AG04449 (cell line): ENCODE measurements at regions of chr17 and their contacts with region 1.

Region 1: GRCh38 chr17:1882836-1883235 is 53.0 kb downstream of the RPA1 start:
- DNase-seq: no peak
- H3K4me3 ChIP-seq: no peak overlapping the region
- CTCF ChIP-seq: peak; percentile 47

Region 2: GRCh38 chr17:1793447-1793806 is 89.4 kb before region 1 on chr17:
- CTCF ChIA-PET with region 1: no interaction called
- POLR2A ChIA-PET with region 1: no interaction called
- DNase-seq: no peak
- H3K4me3 ChIP-seq: no peak overlapping the region
- CTCF ChIP-seq: no peak

Region 3: DNA sequence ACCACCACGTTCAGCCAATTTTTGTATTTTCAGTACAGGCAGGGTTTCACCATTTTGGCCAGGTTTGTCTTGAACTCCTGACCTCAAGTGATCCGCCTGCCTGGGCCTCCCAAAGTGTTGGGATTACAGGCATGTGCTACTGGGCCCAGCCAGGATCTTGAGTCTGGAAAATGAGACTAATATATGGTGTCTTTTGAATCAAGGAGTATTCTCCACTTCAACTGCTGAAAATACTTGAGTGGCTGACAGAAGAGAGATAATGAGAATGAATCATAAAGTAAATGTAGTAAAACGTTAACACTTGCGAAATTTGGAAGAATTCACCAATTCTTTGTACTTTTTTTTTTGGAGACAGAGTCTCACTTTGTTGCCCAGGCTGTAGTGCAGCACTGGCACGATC is 69.7 kb before region 1 on chr17:
- CTCF ChIA-PET with region 1: no interaction called
- POLR2A ChIA-PET with region 1: no interaction called
- DNase-seq: no peak
- H3K4me3 ChIP-seq: no peak overlapping the region
- CTCF ChIP-seq: no peak

Region 4: DNA sequence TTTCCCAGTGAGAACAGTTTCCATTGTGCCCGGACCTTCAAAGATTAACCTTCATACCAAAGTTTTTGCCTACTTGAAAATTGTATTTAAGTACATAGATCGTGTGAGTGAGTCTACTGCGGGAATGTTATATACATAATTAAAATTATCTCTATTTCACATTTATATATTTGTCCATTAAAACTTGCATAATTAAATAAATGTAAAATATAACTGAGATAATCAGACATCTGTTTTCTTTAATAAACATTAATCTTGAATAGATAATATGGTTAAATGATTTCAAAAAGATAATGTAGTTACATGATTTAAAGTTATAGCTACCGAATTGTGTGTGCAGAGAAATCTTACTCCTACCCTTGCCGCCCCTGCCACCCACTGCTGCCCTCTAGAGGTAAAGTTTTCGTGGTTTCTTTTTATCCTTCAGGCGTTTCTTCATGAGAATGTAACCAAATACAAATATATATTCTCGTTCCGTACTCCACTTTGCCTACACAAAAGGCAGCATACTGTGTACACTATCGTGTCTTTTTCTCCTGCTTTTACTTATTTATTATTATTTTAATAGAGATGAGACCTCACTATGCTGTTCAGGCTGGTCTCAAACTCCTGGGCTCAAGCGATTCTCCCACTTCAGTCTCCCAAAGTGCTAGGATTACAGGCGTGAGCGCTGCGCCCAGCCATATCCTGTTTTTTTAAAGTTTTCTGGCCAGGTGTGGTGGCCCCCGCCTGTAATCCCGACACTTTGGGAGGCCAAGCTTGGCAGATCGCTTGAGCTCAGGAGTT is 17.4 kb before region 1 on chr17:
- CTCF ChIA-PET with region 1: interaction called, 18 read pairs
- POLR2A ChIA-PET with region 1: interaction called, 3 read pairs
- DNase-seq: no peak
- H3K4me3 ChIP-seq: no peak overlapping the region
- CTCF ChIP-seq: peak; percentile 34

Region 5: DNA sequence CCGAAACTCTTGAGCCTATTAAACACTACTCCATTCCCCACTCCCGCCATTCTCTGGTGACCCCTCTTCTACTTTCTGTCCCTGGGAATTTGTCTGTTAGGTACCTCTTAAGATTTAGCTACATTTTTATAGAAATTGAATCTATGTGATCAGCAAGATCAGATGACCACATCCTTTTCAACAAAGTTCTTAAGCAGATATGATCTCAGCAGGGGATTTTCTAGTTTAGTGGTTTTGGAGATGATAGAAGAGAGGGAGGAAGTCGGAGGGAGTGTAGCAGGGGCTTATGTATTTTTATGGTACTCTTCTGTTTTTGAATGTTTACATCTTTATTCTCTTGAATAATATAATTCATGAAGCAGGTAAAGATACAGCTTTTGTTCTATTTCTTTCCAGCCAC is 12.2 kb before region 1 on chr17:
- CTCF ChIA-PET with region 1: interaction called, 18 read pairs
- POLR2A ChIA-PET with region 1: interaction called, 3 read pairs
- DNase-seq: no peak
- H3K4me3 ChIP-seq: no peak overlapping the region
- CTCF ChIP-seq: no peak

Region 6: GRCh38 chr17:1896243-1897104 is 13.6 kb after region 1 on chr17:
- CTCF ChIA-PET with region 1: interaction called, 57 read pairs
- POLR2A ChIA-PET with region 1: no interaction called
- DNase-seq: no peak
- H3K4me3 ChIP-seq: no peak overlapping the region
- CTCF ChIP-seq: no peak

Region 7: DNA sequence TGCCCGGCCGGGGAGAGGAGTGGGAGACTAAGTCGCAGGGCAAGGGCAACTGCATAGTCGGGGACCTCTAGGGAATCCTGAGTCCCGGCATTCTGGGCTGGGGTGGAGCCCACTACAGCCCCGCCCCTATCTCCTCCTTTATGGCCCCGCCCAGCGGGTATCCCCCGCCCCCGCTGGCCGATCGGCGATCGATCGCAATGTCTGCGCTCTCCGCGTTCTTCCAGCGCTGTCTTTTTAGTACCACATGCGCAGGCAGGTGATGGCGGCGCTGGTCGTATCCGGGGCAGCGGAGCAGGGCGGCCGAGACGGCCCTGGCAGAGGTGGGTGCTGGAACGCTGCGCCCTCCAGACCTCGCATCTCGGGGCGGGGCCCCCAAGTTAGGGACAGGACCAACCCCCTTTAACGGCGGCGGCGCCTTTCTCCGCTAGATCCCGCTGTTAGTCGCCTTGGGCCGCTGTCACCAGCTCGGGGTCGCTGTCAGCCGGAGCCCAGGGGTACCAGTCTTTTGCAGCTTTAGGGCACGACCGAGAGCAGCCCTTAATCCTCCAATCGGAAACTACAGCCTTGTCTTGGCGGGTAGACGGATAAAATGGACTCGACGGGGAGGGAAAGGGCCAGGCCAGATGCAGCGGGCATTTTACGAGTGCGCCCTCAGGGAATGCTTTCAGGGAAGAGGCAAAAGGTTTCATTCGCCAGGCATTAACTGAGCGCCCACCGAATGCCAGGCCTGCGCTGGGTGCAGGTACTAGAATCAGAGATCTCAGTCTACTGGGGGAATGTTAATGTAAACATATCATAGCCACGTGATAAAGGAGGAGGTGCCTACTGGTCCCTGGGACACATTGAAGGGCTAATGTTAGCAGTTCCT is 147.3 kb after region 1 on chr17 and contains the start of gene DPH1:
- CTCF ChIA-PET with region 1: interaction called, 87 read pairs
- POLR2A ChIA-PET with region 1: no interaction called
- DNase-seq: no peak
- H3K4me3 ChIP-seq: peak within 1 kb of the TSS; percentile 100
- CTCF ChIP-seq: no peak

Region 8: DNA sequence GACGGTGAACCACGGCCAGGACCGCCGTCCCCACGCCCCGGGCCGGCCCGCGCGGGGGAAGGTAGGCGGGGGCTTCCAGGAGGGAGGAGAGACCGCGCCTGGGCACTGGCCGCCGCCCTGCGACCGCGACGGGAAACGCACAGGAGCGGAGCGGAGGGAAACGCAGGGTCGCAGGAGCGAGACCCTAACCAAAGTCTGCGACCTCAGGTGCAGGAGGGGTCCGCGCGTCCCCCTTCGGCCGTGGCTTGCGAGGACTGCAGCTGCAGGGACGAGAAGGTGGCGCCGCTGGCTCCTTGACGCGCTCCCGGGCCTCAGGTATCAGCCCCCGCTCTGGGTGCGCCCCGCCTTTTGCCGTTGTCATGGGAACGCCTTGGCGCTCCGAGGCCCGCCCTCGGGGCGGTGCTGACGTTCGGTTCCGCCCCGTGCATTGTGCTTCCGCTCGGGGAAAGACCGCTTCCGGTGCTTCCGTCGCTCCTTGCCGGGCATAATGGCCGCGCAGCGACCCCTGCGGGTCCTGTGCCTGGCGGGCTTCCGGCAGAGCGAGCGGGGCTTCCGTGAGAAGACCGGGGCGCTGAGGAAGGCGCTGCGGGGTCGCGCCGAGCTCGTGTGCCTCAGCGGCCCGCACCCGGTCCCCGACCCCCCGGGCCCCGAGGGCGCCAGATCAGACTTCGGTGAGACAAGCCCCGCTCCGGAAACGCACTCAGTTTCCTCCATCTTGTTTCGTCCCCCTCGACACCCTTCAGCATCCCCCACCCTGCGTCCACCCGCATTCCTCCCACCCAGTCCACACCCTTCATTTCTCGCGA is 158.9 kb after region 1 on chr17 and contains the start of gene OVCA2:
- CTCF ChIA-PET with region 1: interaction called, 16 read pairs
- POLR2A ChIA-PET with region 1: interaction called, 3 read pairs
- DNase-seq: no peak
- H3K4me3 ChIP-seq: peak within 1 kb of the TSS; percentile 81
- CTCF ChIP-seq: peak; percentile 81